Dorsolateral prefrontal cortex (tissue), 120 donors: ENCODE measurements at regions of chr2 and their contacts with region 1.

Region 1: DNA sequence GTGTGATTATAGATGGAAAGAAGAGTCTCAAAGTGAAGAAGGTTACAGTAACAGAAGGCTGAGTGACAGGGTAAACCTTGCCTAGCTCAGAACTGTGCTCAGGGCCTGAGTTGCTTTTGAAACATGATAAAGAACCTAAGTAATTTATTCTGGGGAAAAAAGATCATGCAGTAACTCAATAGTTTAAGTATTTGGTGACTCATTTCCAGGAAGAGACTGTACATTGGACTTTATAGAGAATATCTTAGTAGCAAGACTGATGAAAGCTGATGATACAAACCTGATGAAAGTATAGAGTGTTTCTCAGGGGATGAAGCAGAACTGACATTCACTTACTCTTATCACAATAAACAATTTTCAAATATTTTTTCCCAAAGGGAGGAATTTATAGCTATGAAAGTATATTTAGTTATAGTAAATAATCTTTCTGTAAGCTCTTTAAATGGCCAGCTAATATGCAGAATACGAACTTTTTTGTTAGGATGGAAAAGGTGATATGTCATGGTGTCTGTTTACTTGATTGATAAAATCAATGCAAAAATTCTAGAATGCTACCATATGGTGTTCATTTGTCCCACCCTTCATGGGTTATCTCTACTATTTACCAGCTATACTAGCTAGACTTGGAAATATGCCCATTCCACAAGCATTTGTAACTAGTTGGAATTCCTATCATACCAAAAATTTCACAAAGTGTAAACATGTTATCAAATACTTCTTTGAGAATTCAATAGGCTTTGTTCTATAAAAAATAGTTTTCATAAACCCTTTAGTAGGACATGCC is 1265.5 kb upstream of the ACVR2A start:
- DNase-seq: no peak
- H3K4me3 ChIP-seq: no peak overlapping the region
- H3K27ac ChIP-seq: no peak overlapping the region
- H3K27me3 ChIP-seq: peaks cover 0 to 3% (median 0%) of the 10 kb centered on the region in 45 donors
- CTCF ChIP-seq: no peak

Region 2: DNA sequence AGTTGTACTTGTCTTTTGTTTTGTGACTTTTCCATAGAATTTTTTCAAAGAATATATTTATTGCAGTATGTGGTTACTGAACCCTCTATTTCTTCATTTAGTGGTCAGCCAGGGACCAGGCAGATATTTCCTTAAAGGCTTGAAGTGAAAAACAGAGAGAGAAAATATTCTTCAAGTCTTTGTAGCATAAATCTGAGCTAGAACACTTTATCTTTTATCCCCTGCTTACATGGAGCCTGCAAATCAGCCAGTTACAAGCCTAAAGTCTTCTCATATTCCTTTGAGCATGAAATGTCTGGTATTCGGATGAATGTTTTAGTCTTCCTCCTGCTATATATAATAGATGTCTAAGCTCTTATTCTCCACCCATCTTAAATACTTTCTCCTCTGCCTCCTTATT is 292.1 kb before region 1 on chr2:
- intact Hi-C with region 1: no loop called
- DNase-seq: no peak
- H3K4me3 ChIP-seq: no peak overlapping the region
- H3K27ac ChIP-seq: no peak overlapping the region
- H3K27me3 ChIP-seq: no peaks in the 10 kb centered on the region
- CTCF ChIP-seq: no peak

Region 3: GRCh38 chr2:146429366-146429765 is 150.0 kb before region 1 on chr2:
- intact Hi-C with region 1: no loop called
- DNase-seq: no peak
- H3K4me3 ChIP-seq: no peak overlapping the region
- H3K27ac ChIP-seq: no peak overlapping the region
- H3K27me3 ChIP-seq: no peaks in the 10 kb centered on the region
- CTCF ChIP-seq: no peak

Region 4: GRCh38 chr2:146481629-146482028 is 97.7 kb before region 1 on chr2:
- intact Hi-C with region 1: no loop called
- DNase-seq: no peak
- H3K4me3 ChIP-seq: no peak overlapping the region
- H3K27ac ChIP-seq: no peak overlapping the region
- H3K27me3 ChIP-seq: peaks cover 0 to 4% (median 0%) of the 10 kb centered on the region in 45 donors
- CTCF ChIP-seq: no peak

Region 5: GRCh38 chr2:146615778-146616177 is 36.4 kb after region 1 on chr2:
- intact Hi-C with region 1: loop called in 1 of 2 experiments (anchors 2 kb)
- DNase-seq: no peak
- H3K4me3 ChIP-seq: no peak overlapping the region
- H3K27ac ChIP-seq: no peak overlapping the region
- H3K27me3 ChIP-seq: peaks cover 0 to 4% (median 0%) of the 10 kb centered on the region in 45 donors
- CTCF ChIP-seq: no peak